Caco-2 (cell line): ENCODE measurements at regions of chr2 and their contacts with region 1.

Region 1: DNA sequence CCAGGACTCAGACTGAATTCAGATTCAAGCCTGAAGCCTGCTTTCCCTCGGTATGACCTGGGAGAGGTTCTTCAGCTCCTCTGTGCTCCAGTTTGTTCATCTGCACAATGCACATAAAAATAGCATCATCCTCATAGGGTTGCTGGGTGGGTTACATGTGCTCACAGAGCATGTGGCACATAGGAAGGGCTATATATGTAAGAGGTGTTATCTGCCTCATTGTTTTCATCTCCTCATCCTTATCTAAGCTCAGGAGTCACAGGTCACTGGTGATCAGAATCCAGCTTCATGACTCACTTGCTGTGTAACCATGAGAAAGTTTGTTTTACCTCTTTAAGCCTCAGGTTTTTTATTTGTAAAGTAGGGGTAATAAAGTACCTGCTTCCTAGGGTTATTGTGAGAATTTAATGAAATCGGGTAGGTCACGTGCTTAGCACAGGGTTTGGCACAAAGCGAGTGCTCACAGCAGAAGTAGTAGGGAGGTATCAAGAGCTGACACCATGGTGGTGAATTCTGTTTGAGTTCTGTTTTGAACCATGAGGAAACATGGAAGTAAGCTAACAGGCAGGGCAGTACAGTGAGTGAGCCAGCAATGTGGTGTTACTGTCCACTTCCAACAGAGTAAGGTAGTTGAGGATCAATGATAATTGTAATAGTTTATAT is 141.5 kb upstream of the LTBP1 start:
- DNase-seq: peak; percentile 75 to 81
- H3K4me3 ChIP-seq: no peak overlapping the region
- H3K4me3 Mint-ChIP-seq: peak overlapping the region; percentile 2
- H3K27ac Mint-ChIP-seq: peak overlapping the region; percentile 65
- H3K4me1 ChIP-seq: peaks cover 34% of the 10 kb centered on the region
- H3K4me1 Mint-ChIP-seq: peaks cover 37% of the 10 kb centered on the region
- H3K27me3 ChIP-seq: no peaks in the 10 kb centered on the region
- H3K27me3 Mint-ChIP-seq: no peaks in the 10 kb centered on the region
- CTCF ChIP-seq: no peak

Region 2: DNA sequence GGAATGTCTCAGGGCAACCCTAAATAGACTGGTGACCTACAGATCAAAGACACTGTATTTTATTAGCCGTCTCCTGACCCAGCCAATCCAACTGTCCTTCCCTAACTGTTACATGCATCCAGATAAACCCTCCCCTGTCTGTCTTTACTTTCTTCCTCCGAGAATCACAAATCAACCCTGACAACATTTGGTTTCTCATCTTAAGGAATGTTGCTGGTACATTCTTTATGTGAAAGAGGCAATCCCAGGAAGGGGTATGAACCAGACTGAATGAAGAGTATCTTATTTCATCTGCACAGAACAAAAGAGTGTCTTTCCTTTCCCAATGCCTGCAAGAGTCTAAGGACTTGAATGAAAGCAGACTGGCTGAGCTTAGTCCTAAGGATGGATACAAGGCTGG is 27.6 kb after region 1 on chr2:
- CTCF ChIA-PET with region 1: no interaction called
- POLR2A ChIA-PET with region 1: no interaction called
- intact Hi-C with region 1: loop called (anchors 1 kb)
- DNase-seq: peak; percentile 68 to 70
- H3K4me3 ChIP-seq: no peak overlapping the region
- H3K4me3 Mint-ChIP-seq: peak overlapping the region; percentile 56
- H3K27ac Mint-ChIP-seq: peak overlapping the region; percentile 84
- H3K4me1 ChIP-seq: peaks cover 45% of the 10 kb centered on the region
- H3K4me1 Mint-ChIP-seq: peaks cover 51% of the 10 kb centered on the region
- H3K27me3 ChIP-seq: no peaks in the 10 kb centered on the region
- H3K27me3 Mint-ChIP-seq: no peaks in the 10 kb centered on the region
- CTCF ChIP-seq: no peak

Region 3: DNA sequence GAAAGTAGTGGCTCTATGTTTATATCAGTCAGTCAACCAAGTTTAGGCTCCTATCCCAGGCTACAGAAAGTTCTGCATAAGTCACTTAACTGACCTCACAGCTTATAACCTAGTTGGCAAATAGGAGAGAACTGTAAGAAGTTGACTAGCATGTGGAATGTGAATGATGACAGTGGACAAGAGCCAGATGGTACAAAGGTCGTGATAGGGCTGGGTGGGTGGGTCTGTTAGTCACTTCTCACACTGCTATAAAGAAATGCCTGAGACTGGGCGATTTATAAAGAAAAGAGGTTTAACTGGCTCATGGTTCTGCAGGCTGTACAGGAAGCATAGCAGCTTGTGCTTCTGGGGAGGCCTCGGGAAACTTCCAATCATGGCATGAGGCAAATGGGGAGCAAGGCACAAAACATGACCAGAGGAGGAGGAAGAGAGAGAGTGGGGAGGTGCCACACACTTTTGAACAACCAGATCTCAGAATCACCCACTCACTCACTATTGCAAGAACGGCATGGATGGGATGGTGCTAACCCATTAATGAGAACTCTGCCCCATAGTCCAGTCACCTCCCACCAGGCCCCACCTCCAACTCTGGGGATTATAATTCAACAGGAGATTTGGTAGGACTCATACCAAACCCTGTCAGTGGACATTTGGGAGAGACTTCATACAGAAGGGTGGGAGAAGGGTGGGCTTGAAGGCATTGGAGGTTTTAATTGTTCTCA is 210.3 kb after region 1 on chr2:
- CTCF ChIA-PET with region 1: no interaction called
- POLR2A ChIA-PET with region 1: no interaction called
- intact Hi-C with region 1: loop called (anchors 10 kb)
- DNase-seq: peak; percentile 67
- H3K4me3 ChIP-seq: no peak overlapping the region
- H3K4me3 Mint-ChIP-seq: peak overlapping the region; percentile 43
- H3K27ac Mint-ChIP-seq: peak overlapping the region; percentile 87
- H3K4me1 ChIP-seq: peaks cover 46% of the 10 kb centered on the region
- H3K4me1 Mint-ChIP-seq: peaks cover 36% of the 10 kb centered on the region
- H3K27me3 ChIP-seq: no peaks in the 10 kb centered on the region
- H3K27me3 Mint-ChIP-seq: no peaks in the 10 kb centered on the region
- CTCF ChIP-seq: no peak

Region 4: GRCh38 chr2:33033606-33034081 is 228.4 kb after region 1 on chr2:
- CTCF ChIA-PET with region 1: interaction called, 6 read pairs
- POLR2A ChIA-PET with region 1: no interaction called
- intact Hi-C with region 1: loop called (anchors 1 kb)
- DNase-seq: peak in 1 of 2 experiments; percentile 50
- H3K4me3 ChIP-seq: no peak overlapping the region
- H3K4me3 Mint-ChIP-seq: no peak overlapping the region
- H3K27ac Mint-ChIP-seq: no peak overlapping the region
- H3K4me1 ChIP-seq: no peaks in the 10 kb centered on the region
- H3K4me1 Mint-ChIP-seq: peaks cover 6% of the 10 kb centered on the region
- H3K27me3 ChIP-seq: no peaks in the 10 kb centered on the region
- H3K27me3 Mint-ChIP-seq: no peaks in the 10 kb centered on the region
- CTCF ChIP-seq: peak; percentile 59 to 73

Region 5: DNA sequence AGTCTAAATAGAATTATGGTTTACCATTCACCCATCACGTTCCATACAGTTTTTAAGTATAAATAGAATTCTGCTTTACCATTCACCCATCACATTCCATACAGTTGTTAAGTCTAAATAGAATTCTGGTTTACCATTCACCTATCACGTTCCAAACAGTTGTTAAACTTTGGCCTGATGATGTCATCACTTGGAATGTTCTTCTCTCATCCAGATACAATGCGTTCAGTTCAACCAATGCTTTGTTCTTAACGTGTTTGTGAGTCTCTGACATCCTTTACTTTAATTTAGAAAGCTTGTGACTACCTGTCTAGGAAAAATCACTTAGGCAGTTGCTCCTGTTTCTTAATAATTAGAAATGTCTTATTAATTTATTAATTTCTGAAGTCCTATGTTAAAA is 434.9 kb after region 1 on chr2:
- CTCF ChIA-PET with region 1: no interaction called
- POLR2A ChIA-PET with region 1: interaction called, 11 read pairs
- intact Hi-C with region 1: no loop called
- DNase-seq: peak in 1 of 2 experiments; percentile 57
- H3K4me3 ChIP-seq: no peak overlapping the region
- H3K4me3 Mint-ChIP-seq: no peak overlapping the region
- H3K27ac Mint-ChIP-seq: no peak overlapping the region
- H3K4me1 ChIP-seq: peaks cover 12% of the 10 kb centered on the region
- H3K4me1 Mint-ChIP-seq: no peaks in the 10 kb centered on the region
- H3K27me3 ChIP-seq: no peaks in the 10 kb centered on the region
- H3K27me3 Mint-ChIP-seq: no peaks in the 10 kb centered on the region
- CTCF ChIP-seq: no peak

Region 6: DNA sequence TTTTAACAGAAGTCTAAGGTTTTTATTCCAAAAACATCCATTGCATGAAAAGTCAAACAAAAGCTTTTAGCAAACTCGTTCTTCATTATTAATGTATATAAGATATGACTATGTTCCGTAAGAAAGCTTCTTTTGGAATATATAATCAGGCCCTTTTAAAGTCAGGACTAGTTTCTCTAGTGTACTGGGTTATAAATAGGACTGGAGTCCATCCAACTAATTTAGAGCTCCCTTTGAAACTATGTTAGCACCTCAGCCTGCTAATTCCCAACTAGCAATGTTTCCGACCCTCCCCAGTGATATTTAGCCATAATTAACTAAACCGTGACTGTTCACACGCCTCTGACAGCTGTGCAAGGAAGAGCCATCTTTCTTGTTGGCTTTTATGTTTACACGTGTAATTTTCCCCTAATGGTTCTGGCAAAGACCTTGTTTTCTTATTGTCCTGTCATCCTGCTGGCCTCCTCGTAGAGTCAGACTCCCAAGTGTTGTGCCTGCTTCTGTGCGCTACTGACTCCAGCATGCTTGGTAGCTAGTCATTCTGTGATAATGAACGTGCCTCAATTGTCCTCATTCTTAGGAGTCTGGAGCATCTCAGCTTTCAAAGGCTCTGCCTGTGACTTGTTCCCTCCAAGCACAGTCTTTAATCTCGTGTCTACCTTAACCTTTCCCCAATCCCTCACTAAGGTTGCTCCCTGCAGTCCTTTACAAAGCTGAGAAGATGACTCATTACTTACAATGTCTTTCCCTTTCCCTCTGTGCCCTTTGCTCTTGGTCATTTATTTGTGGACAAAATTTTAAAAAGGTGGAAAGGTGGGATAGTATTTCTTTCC is 499.0 kb after region 1 on chr2:
- CTCF ChIA-PET with region 1: no interaction called
- POLR2A ChIA-PET with region 1: no interaction called
- intact Hi-C with region 1: loop called (anchors 1 kb)
- DNase-seq: peak in 1 of 2 experiments; percentile 12
- H3K4me3 ChIP-seq: no peak overlapping the region
- H3K4me3 Mint-ChIP-seq: no peak overlapping the region
- H3K27ac Mint-ChIP-seq: peak overlapping the region; percentile 26
- H3K4me1 ChIP-seq: peaks cover 7% of the 10 kb centered on the region; the same call in 1 of the 2 replicates
- H3K4me1 Mint-ChIP-seq: peaks cover 9% of the 10 kb centered on the region
- H3K27me3 ChIP-seq: no peaks in the 10 kb centered on the region
- H3K27me3 Mint-ChIP-seq: no peaks in the 10 kb centered on the region
- CTCF ChIP-seq: no peak

Region 7: GRCh38 chr2:33475224-33476130 is 670.2 kb after region 1 on chr2:
- CTCF ChIA-PET with region 1: no interaction called
- POLR2A ChIA-PET with region 1: no interaction called
- intact Hi-C with region 1: loop called (anchors 5 kb)
- DNase-seq: peak; percentile 87 to 90
- H3K4me3 ChIP-seq: peak overlapping the region; percentile 50
- H3K4me3 Mint-ChIP-seq: peak overlapping the region; percentile 97
- H3K27ac Mint-ChIP-seq: peak overlapping the region; percentile 96
- H3K4me1 ChIP-seq: peaks cover 35% of the 10 kb centered on the region
- H3K4me1 Mint-ChIP-seq: peaks cover 26% of the 10 kb centered on the region
- H3K27me3 ChIP-seq: no peaks in the 10 kb centered on the region
- H3K27me3 Mint-ChIP-seq: no peaks in the 10 kb centered on the region
- CTCF ChIP-seq: peak; percentile 85 to 91